ENCODE measurements at regions of chr11 and their contacts with region 1.

Region 1: DNA sequence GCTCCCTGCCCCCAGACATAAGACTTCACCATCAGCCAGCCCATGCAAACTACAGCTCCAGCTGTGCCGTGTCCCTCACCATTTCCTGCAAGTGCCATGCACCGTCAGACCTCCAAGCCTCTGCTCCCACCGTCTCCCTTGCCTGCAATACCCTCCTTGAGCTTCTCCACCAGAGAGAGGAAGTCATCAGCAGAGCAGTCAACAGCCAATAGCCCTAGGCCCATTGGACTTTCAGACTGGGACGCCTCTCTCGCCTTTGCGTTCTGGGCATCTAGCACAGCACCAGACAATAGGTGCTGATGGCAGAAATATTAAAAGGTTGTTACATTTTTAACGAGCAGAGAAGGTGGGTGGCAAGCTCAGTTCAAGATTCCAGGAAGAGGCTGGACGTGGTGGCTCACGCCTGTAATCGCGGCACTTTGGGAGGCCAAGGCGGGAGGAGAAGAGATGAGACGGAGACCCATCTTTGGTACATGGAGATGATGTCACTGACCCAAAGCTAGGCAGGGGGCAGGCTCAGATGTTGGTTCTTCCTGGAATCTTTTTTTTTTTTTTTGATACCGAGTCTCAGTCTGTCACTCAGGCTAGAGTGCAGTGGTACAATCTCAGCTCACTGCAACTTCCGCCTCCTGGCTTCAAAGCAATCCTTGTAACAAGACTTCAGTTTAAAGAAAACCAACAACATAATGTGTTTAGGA is 31.9 kb downstream of the SCGB1A1 start:
- DNase-seq: no peak
- ATAC-seq: no peak
- H3K4me3 Mint-ChIP-seq: no peak overlapping the region
- H3K27ac Mint-ChIP-seq: no peak overlapping the region
- H3K4me1 Mint-ChIP-seq: no peaks in the 10 kb centered on the region
- H3K27me3 Mint-ChIP-seq: peaks cover 24% of the 10 kb centered on the region

Region 2: DNA sequence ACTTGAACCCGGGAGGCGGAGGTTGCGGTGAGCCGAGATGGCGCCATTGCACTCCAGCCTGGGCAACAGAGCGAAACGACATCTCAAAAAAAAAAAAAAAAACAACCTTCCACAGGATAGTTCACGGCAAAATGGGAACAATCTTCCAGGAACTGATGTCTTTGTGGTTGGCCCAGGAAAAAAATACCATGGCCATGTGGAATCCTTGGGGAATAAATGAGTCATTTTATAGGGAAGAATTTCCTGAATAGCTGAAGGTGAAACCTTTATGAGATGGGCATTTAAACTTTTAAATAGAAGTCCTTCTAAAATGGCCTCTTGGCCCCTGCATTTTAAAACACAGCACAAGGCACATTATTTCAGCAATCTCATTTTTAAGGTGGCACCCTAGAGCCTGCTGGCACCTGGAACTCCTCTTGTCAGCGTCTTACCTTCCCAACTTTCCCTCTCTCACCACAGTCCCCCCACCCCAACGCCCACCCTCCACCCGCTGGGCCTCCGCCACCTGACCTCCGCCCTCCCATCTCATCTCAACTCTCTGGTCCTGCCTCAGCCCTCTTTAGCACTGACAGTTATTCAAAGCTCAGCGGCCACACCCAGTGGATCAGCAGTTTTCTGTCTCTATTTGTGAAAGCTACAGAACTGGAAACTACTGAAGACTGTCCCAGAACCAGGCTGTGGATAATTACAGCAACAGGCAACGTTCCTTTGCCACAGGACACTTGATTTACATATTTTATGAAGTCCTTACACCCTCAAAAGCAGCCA is 11.2 kb after region 1 on chr11:
- CTCF ChIA-PET with region 1: interaction called, 10 read pairs
- DNase-seq: no peak
- ATAC-seq: no peak
- H3K4me3 Mint-ChIP-seq: no peak overlapping the region
- H3K27ac Mint-ChIP-seq: no peak overlapping the region
- H3K4me1 Mint-ChIP-seq: peaks cover 12% of the 10 kb centered on the region
- H3K27me3 Mint-ChIP-seq: no peaks in the 10 kb centered on the region

Region 3: GRCh38 chr11:62487738-62488551 is 37.3 kb after region 1 on chr11:
- CTCF ChIA-PET with region 1: no interaction called
- DNase-seq: no peak
- ATAC-seq: no peak
- H3K4me3 Mint-ChIP-seq: no peak overlapping the region
- H3K27ac Mint-ChIP-seq: no peak overlapping the region
- H3K4me1 Mint-ChIP-seq: peaks cover 6% of the 10 kb centered on the region
- H3K27me3 Mint-ChIP-seq: no peaks in the 10 kb centered on the region